ENCODE measurements at regions of chr11 and their contacts with region 1.

Region 1: GRCh38 chr11:128714881-128715280 is 21.0 kb downstream of the FLI1 start:
- DNase-seq: no peak
- ATAC-seq: no peak
- H3K4me3 ChIP-seq: no peak overlapping the region
- H3K27ac ChIP-seq: no peak overlapping the region
- H3K4me1 ChIP-seq: peaks cover 8% of the 10 kb centered on the region
- H3K27me3 ChIP-seq: no peaks in the 10 kb centered on the region
- CTCF ChIP-seq: no peak

Region 2: DNA sequence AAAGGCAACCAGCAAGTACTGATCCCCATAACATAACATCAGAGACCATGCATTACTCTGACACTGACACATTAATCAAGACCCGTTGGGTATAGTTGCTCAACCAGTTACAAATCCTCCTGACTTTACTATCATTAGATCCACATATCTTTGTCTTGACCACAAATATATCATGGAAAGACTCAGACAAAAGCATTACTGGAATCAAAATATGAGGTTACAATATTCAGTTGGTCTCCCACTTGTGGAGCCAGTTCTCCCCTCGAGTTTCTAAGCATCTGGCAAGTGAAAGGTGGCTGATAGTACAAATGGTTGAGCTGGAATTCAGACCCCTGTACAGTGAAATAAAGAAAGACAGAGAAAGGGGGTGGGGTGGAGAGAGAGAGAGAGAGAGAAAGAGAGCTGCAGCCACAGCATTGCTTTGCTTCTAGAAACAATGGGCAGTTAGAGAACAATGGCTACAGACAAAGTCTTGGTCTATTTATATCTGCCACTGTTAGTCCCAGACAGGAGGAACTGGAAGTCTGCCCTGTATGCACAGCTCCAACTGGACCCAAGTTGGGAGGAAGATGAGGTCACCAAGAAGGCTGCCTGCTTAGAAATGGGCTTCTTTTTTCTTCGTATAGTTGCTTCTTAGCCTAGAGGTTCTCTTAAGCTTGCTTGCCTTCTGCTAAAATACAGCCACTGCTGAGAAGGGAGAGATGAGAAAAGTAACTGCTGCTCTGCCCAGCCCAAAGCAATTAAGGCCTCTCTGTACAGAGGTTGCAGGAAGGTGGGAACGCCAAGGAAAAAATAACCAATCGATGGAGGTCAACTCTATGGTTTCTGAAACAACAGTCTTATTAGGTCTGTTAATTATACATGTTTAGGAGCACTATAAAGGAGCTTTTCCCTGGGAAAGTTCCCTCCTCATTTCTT is 213.0 kb before region 1 on chr11:
- CTCF ChIA-PET with region 1: no interaction called
- POLR2A ChIA-PET with region 1: interaction called, 11 read pairs
- in situ Hi-C with region 1: no loop called
- intact Hi-C with region 1: no loop called
- DNase-seq: no peak
- ATAC-seq: peak; percentile 12; the same call in 1 of the 2 replicates
- H3K4me3 ChIP-seq: no peak overlapping the region; a peak in 1 of 4 replicates
- H3K27ac ChIP-seq: peak overlapping the region; percentile 96
- H3K4me1 ChIP-seq: peaks cover 100% of the 10 kb centered on the region
- H3K27me3 ChIP-seq: no peaks in the 10 kb centered on the region
- CTCF ChIP-seq: no peak

Region 3: GRCh38 chr11:128517457-128518230 is 197.2 kb before region 1 on chr11:
- CTCF ChIA-PET with region 1: no interaction called
- POLR2A ChIA-PET with region 1: no interaction called
- in situ Hi-C with region 1: no loop called
- intact Hi-C with region 1: no loop called
- DNase-seq: no peak
- ATAC-seq: no peak
- H3K4me3 ChIP-seq: peak overlapping the region; percentile 82 to 93
- H3K27ac ChIP-seq: peak overlapping the region; percentile 92
- H3K4me1 ChIP-seq: peaks cover 70% of the 10 kb centered on the region
- H3K27me3 ChIP-seq: no peaks in the 10 kb centered on the region
- CTCF ChIP-seq: no peak

Measured in Panc1 (cell line).